Activated naive CD4-positive, alpha-beta T cell treated with anti-CD3 and anti-CD28 coated beads for 36 hours (primary cell): ENCODE measurements at regions of chr10 and their contacts with region 1.

Region 1: GRCh38 chr10:103752680-103753248 is 102.6 kb downstream of the SH3PXD2A start:
- DNase-seq: peak; percentile 64
- H3K4me3 Mint-ChIP-seq: no peak overlapping the region
- H3K27ac Mint-ChIP-seq: no peak overlapping the region
- H3K4me1 Mint-ChIP-seq: peaks cover 12% of the 10 kb centered on the region
- H3K27me3 Mint-ChIP-seq: no peaks in the 10 kb centered on the region

Region 2: GRCh38 chr10:103564776-103565520 is 187.8 kb before region 1 on chr10:
- CTCF ChIA-PET with region 1: no interaction called
- intact Hi-C with region 1: no loop called
- DNase-seq: peak; percentile 74
- H3K4me3 Mint-ChIP-seq: no peak overlapping the region
- H3K27ac Mint-ChIP-seq: no peak overlapping the region
- H3K4me1 Mint-ChIP-seq: no peaks in the 10 kb centered on the region
- H3K27me3 Mint-ChIP-seq: peaks cover 2% of the 10 kb centered on the region

Region 3: DNA sequence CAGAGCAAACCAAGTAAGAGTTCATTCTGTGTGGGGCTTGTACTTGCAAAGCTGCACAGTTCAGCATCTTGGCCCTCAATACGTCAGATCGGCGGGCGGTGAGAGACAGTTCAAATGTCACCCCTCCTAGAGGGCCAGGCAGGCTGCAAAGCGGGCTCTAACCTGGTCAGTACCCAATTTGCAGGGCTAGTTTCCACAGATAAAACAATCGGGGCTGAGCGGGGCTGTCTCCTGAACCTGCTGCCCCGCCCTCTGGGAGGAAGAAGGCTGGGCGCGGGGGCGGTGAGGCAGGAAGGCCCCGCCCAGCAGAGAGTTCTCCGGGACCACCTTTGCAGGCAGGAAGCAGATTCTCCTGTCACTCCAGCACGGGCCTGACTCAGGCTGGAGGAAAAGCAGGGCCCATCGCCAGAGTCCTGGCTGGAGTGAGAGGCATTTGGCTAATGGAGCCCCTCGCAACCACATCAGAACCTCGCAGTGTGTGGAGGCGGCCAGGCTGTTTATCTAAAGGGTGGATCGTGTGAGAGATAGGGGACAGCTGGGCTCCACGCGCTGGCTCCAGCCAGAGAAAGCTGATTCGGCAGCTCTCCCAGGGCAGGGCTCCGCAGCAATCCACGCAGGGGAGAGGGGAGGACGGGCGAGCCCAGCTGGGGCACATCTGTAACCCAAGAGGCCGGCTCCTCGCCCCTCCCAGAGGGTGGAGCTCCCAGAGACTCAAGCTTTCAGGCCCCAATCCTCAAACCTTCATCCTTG is 19.5 kb after region 1 on chr10:
- CTCF ChIA-PET with region 1: interaction called, 13 read pairs
- intact Hi-C with region 1: no loop called
- DNase-seq: peak; percentile 74
- H3K4me3 Mint-ChIP-seq: peak overlapping the region; percentile 88
- H3K27ac Mint-ChIP-seq: peak overlapping the region; percentile 84
- H3K4me1 Mint-ChIP-seq: peaks cover 24% of the 10 kb centered on the region
- H3K27me3 Mint-ChIP-seq: no peaks in the 10 kb centered on the region

Region 4: DNA sequence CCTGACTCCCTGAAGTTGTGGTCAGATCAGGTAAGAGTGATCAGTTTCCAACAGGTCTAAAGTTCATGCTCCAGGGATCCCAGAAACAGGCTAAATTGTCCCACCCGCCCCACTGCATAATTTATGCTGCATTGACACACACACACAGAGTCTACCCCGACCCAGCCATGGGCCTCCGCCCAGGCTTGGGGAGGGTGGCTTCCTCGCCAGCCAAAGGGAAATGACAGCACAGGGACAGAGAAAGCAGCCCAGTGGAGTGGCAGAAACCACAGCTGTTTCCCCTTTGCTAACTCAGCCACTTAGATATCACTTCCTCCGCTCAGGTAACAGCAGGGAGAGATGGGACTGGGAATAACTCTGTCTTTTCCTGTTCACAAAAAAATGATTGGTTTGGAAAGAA is 93.2 kb after region 1 on chr10:
- CTCF ChIA-PET with region 1: interaction called, 12 read pairs
- intact Hi-C with region 1: no loop called
- DNase-seq: peak; percentile 61
- H3K4me3 Mint-ChIP-seq: no peak overlapping the region
- H3K27ac Mint-ChIP-seq: no peak overlapping the region
- H3K4me1 Mint-ChIP-seq: peaks cover 17% of the 10 kb centered on the region
- H3K27me3 Mint-ChIP-seq: no peaks in the 10 kb centered on the region